Activated T-helper 1 cell treated with anti-CD3 and anti-CD28 coated beads, Interleukin-12 subunit alpha, Interleukin-12 subunit beta, Interleukin-2, Interleukin-4 antibody, amounts not matched to agents 30 ng/mL and 10 ng/mL and 1 ng/mL, durations not matched to agents 14 hours and 24 hours and 36 hours (primary cell): ENCODE measurements at regions of chr4 and their contacts with region 1.

Region 1: DNA sequence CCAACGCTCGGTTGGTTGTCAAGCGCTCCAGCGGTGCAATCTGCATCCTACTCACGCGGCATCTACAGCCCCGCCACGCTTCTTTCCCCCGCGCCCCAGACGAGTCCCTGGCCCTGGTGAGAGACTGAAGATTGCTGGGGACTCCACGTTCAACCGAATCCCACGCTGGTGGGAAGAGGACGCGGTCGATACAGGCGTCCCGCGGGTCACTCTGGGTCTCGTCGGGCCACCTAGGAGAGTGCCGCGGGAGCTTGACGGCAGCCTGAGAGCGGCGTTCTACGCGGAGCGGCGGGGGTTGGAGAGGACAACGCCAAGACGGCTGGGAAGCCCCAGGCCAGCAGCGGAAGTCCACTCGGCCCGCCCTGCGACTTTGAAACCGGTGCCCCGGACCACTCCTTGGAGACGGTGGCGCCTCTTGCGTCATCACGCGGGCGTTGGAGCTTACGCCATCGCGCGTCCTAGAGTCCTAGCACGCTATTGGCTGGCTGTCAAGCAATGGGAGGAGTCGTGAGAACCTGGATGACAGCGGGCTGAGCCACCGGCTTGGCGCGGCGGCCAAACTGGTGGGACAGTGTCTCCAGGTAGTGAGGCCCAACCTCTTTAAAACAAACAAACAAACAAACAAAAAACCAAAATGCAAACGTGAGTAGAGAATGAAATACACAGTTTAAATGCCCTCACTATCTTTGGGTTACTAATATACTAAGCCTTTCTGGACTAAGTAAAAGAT is at the start of gene SCLT1:
- DNase-seq: peak; percentile 96
- H3K4me3 Mint-ChIP-seq: peak within 1 kb of the TSS; percentile 66
- H3K27ac Mint-ChIP-seq: peak within 1 kb of the TSS; percentile 42
- H3K4me1 Mint-ChIP-seq: peaks cover 56% of the 10 kb centered on the region
- H3K27me3 Mint-ChIP-seq: no peaks in the 10 kb centered on the region
- total RNA-seq, gene SCLT1: 24.3 and 24.4 TPM in 2 replicates

Region 2: DNA sequence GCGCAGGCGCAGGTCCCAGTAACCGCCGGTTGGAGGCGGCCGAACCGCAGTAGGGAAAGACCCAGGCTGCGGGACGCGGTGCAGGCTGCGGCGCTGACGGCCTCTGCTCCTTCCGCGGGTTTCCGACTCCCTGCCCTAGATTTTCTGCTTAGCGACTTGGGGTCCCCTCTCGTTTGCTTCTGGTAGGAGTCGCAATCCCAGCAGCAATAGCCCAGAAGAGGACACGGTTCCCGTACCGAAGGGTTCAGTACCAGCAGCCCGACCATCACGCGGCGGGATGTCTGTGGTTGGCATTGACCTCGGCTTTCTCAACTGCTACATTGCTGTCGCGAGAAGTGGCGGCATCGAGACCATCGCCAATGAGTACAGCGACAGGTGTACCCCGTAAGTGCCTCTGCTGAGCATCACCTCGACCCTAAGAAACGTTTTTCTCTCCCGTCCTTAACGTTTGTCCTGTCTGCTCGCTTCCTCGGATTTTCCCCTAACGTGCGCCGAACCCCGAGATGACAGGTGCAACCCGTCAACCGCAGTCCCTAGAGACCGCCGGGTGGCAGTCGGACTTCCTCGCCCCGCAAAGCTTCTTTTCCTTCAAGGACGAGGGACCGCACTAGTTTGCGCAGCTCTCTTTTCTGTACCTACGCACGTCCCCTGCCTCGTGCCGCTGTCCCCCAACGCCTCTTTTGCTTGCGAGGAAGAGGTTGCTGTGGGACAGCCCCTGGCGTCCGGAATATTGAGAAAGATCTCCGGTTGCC is 1310.9 kb before region 1 on chr4 and contains the start of gene HSPA4L:
- intact Hi-C with region 1: loop called (anchors 10 kb)
- DNase-seq: peak; percentile 64
- H3K4me3 Mint-ChIP-seq: peak within 1 kb of the TSS; percentile 91
- H3K27ac Mint-ChIP-seq: peak within 1 kb of the TSS; percentile 97
- H3K4me1 Mint-ChIP-seq: peaks cover 32% of the 10 kb centered on the region
- H3K27me3 Mint-ChIP-seq: peaks cover 65% of the 10 kb centered on the region
- total RNA-seq, gene HSPA4L: 2.5 and 3.8 TPM in 2 replicates

Region 3: DNA sequence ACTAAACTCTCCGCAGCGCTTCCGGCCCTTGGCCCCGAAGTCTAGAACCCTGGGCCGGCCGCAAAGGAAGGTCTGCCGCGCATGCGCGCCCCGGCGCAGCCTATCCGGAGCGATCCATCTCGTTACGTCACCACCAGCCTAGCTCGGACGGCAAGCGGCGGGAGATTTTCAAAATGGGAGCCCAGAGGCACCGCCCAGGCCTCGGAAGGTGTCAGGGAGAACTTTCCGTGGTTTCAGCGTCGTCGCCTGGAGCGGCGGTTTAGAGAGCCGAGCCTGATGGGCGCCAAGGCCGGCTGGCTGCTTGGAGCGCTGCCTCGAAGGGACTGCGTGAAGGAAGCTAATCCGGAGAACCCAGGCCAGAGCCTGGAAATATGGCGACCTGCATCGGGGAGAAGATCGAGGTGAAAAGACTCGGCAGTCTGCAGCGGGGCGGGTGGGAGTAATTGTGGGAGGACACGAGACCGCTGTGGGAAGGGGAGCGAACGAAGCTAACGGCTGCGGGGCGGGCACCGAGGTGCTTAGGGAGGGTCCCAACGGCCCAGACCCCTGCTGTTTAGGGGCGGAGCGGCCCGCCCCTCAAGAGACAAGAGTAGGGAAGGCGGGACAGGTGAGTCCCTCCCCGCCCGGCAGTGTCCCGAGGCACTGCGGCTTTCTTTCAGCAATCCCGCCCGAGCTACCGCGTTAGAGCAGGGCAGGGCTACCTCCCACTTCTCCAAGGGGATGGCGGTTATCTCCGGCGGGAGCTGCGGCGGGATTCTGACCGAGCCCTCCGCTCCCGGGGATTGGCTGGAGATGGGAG is 1212.4 kb before region 1 on chr4 and contains the start of gene PLK4:
- intact Hi-C with region 1: loop called (anchors 2 kb)
- DNase-seq: peak; percentile 96
- H3K4me3 Mint-ChIP-seq: peak within 1 kb of the TSS; percentile 91
- H3K27ac Mint-ChIP-seq: peak within 1 kb of the TSS; percentile 91
- H3K4me1 Mint-ChIP-seq: peaks cover 31% of the 10 kb centered on the region
- H3K27me3 Mint-ChIP-seq: no peaks in the 10 kb centered on the region
- total RNA-seq, gene PLK4: 40.7 and 41.2 TPM in 2 replicates

Region 4: DNA sequence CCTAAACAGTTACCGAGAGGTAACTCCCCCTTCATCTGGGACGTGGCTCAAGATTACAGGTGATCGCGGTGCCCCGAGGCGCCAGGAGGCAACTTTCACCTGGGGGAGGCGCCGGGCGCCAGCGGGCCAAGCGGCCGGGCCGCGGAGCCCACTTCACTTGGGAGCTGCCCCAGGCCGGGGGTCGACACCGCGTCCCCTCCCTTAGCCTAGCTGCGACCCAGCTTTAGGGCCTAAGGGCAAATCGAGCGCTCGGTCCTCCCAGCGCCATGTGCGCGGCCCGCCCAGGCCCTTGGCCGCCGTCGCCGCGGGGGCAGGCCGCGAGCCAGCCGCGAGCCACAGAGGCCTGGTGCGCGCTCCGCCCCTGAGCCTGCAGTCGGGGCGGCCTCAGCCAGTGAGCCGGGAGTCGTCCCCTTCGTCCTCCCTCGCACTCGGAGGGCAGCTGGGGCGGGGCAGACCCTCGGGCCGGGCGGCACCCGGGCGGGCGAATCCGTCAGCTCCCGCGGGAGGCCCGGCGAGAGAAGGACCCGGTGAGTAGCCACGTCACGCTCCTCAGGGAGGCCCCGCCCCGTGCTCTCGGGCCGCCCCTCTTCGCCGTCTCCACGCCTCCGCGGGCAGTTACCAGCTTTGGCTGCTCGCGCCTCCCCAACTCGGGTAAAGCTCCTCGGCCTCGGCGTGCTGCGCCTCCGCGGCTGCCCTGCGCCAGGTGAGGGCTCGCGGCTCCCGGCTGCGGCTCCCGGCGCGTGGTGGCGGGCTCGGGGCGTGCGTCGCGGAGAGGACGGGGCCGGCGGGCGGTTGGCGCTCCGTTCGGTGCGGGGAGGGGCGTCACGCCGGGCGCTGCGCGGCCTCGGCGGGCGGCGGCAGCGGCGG is 1032.4 kb before region 1 on chr4 and contains the start of gene LARP1B:
- intact Hi-C with region 1: loop called (anchors 2 kb)
- DNase-seq: peak; percentile 93
- H3K4me3 Mint-ChIP-seq: peak within 1 kb of the TSS; percentile 88
- H3K27ac Mint-ChIP-seq: peak within 1 kb of the TSS; percentile 95
- H3K4me1 Mint-ChIP-seq: peaks cover 6% of the 10 kb centered on the region
- H3K27me3 Mint-ChIP-seq: no peaks in the 10 kb centered on the region
- total RNA-seq, gene LARP1B: 33.3 and 34.5 TPM in 2 replicates

Region 5: GRCh38 chr4:128854433-128854832 is 238.9 kb before region 1 on chr4:
- intact Hi-C with region 1: loop called (anchors 1 kb)
- DNase-seq: no peak
- H3K4me3 Mint-ChIP-seq: peak overlapping the region; percentile 69
- H3K27ac Mint-ChIP-seq: peak overlapping the region; percentile 73
- H3K4me1 Mint-ChIP-seq: peaks cover 41% of the 10 kb centered on the region
- H3K27me3 Mint-ChIP-seq: no peaks in the 10 kb centered on the region

Region 6: GRCh38 chr4:128863312-128864075 is 229.9 kb before region 1 on chr4:
- intact Hi-C with region 1: loop called (anchors 2 kb)
- DNase-seq: peak; percentile 34
- H3K4me3 Mint-ChIP-seq: peak overlapping the region; percentile 27
- H3K27ac Mint-ChIP-seq: peak overlapping the region; percentile 87
- H3K4me1 Mint-ChIP-seq: peaks cover 53% of the 10 kb centered on the region
- H3K27me3 Mint-ChIP-seq: no peaks in the 10 kb centered on the region

Region 7: GRCh38 chr4:129046055-129046959 is 47.0 kb before region 1 on chr4:
- intact Hi-C with region 1: loop called (anchors 1 kb)
- DNase-seq: no peak
- H3K4me3 Mint-ChIP-seq: no peak overlapping the region
- H3K27ac Mint-ChIP-seq: no peak overlapping the region
- H3K4me1 Mint-ChIP-seq: peaks cover 10% of the 10 kb centered on the region
- H3K27me3 Mint-ChIP-seq: no peaks in the 10 kb centered on the region

Region 8: GRCh38 chr4:130043732-130044160 is 950.4 kb after region 1 on chr4:
- intact Hi-C with region 1: no loop called
- DNase-seq: no peak
- H3K4me3 Mint-ChIP-seq: no peak overlapping the region
- H3K27ac Mint-ChIP-seq: no peak overlapping the region
- H3K4me1 Mint-ChIP-seq: no peaks in the 10 kb centered on the region
- H3K27me3 Mint-ChIP-seq: no peaks in the 10 kb centered on the region